A673 (cell line): ENCODE measurements at regions of chr15 and their contacts with region 1.

Region 1: DNA sequence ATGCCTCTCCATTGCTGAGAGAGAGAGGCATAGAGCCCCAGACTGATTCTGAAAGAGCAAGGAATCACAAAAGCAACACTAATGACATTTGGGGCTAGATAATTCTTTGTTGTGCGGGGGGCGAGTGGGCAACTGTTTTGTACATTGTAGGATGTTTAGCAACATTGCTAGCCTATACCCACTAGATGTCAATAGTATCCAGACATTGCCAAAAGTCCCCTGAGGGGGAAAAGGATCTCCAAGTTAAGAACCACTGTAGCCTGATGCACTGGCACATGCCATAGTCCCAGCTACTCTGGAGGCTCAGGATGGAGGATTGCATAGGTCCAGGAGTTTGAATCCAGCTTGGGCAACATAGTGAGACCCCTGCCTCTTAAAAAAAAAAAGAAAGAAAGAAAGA is 22.8 kb upstream of the GOLM2 start:
- DNase-seq: peak; percentile 14
- H3K4me3 ChIP-seq: no peak overlapping the region
- H3K27ac ChIP-seq: no peak overlapping the region
- H3K4me1 ChIP-seq: no peaks in the 10 kb centered on the region
- H3K27me3 ChIP-seq: no peaks in the 10 kb centered on the region
- CTCF ChIP-seq: peak; percentile 24; the same call in 1 of the 2 replicates

Region 2: DNA sequence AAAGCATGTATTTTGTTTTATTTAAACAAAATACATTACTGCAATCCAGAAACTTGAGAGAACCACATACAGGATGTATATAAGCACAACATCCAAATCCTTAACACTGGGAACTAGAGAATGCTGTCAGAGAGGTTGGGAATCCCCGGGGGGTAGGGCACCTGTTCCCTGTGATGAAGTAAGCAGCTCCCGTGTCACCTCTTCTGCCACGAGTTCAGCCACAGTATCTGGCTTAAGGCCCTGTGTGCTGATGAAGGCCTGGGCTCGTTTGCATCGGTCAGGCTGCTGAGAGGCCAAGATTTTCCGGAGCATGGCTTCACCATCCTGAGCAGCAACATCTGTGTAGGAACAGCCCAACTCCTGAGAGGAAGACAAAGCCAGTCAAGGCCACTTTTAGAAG is 307.6 kb after region 1 on chr15:
- CTCF ChIA-PET with region 1: no interaction called
- POLR2A ChIA-PET with region 1: no interaction called
- intact Hi-C with region 1: no loop called
- DNase-seq: no peak
- H3K4me3 ChIP-seq: no peak overlapping the region
- H3K27ac ChIP-seq: no peak overlapping the region
- H3K4me1 ChIP-seq: no peaks in the 10 kb centered on the region
- H3K27me3 ChIP-seq: no peaks in the 10 kb centered on the region
- CTCF ChIP-seq: no peak

Region 3: DNA sequence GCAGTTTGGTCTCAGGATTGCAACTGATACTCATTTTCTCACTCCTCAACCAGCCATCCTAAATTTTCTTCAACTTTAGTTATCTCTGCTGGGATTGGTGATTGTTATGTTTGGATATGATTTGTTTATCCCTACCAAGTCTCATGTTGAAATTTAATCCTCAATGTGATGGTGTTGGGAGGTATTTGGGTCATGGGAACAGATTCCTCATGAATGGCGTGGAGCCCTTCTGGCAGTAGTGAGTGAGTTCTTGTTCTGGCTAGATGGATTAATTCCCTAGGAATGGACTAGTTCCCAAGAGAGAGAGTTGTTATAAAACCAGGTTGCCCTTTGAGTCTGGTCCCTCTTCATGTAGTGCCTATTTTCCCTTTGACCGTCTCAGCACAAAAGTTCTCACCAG is 1769.0 kb after region 1 on chr15:
- CTCF ChIA-PET with region 1: no interaction called
- POLR2A ChIA-PET with region 1: interaction called, 11 read pairs
- intact Hi-C with region 1: no loop called
- DNase-seq: no peak
- H3K4me3 ChIP-seq: no peak overlapping the region
- H3K27ac ChIP-seq: no peak overlapping the region
- H3K4me1 ChIP-seq: no peaks in the 10 kb centered on the region
- H3K27me3 ChIP-seq: no peaks in the 10 kb centered on the region
- CTCF ChIP-seq: no peak